WTC11 (cell line): ENCODE measurements at regions of chr1 and their contacts with region 1.

Region 1: GRCh38 chr1:233440951-233441401 is 113.5 kb downstream of the MAP3K21 start:
- DNase-seq: peak; percentile 34
- ATAC-seq: peak; percentile 94
- H3K4me3 Mint-ChIP-seq: no peak overlapping the region
- H3K27ac Mint-ChIP-seq: no peak overlapping the region
- H3K4me1 Mint-ChIP-seq: no peaks in the 10 kb centered on the region
- H3K27me3 Mint-ChIP-seq: no peaks in the 10 kb centered on the region; the same call in none of the 2 replicates
- CTCF ChIP-seq: peak; percentile 47

Region 2: DNA sequence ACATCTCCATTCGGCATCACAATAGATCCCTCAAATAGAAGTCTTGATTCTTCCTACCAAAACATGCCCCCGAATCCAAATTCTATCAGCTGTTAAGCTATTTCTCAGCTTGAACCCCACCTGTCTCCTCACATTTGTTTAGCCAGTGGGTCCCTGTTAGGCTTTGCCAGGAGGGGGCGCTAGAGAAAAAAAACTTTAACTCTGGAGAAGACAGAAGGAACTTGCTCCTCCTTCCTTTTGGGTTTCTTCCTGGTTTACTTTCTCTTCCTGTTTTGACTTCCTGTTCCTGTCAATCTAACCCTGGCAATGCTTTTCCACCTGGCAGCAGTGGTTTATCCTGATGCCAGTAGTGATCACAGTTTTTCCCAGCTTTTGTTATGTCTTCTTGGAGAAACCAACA is 77.4 kb after region 1 on chr1:
- CTCF ChIA-PET with region 1: interaction called, 19 read pairs
- POLR2A ChIA-PET with region 1: no interaction called
- DNase-seq: peak; percentile 71
- ATAC-seq: peak; percentile 81
- H3K4me3 Mint-ChIP-seq: no peak overlapping the region
- H3K27ac Mint-ChIP-seq: no peak overlapping the region
- H3K4me1 Mint-ChIP-seq: peaks cover 6% of the 10 kb centered on the region
- H3K27me3 Mint-ChIP-seq: no peaks in the 10 kb centered on the region
- CTCF ChIP-seq: peak; percentile 71

Region 3: GRCh38 chr1:233790662-233791375 is 349.8 kb after region 1 on chr1:
- CTCF ChIA-PET with region 1: interaction called, 22 read pairs
- POLR2A ChIA-PET with region 1: no interaction called
- DNase-seq: peak; percentile 16
- ATAC-seq: peak; percentile 95
- H3K4me3 Mint-ChIP-seq: no peak overlapping the region
- H3K27ac Mint-ChIP-seq: no peak overlapping the region
- H3K4me1 Mint-ChIP-seq: 0 out of 2 replicates have a peak, but pooled peaks cover 2% of the 10 kb centered on the region
- H3K27me3 Mint-ChIP-seq: no peaks in the 10 kb centered on the region
- CTCF ChIP-seq: peak; percentile 81

Region 4: GRCh38 chr1:233904633-233905415 is 463.8 kb after region 1 on chr1 and contains the start of gene SLC35F3:
- CTCF ChIA-PET with region 1: interaction called, 21 read pairs
- POLR2A ChIA-PET with region 1: no interaction called
- DNase-seq: peak; percentile 81
- ATAC-seq: peak; percentile 93
- H3K4me3 Mint-ChIP-seq: peak within 1 kb of the TSS; percentile 75
- H3K27ac Mint-ChIP-seq: no peak within 1 kb of the TSS
- H3K4me1 Mint-ChIP-seq: peaks cover 10% of the 10 kb centered on the region
- H3K27me3 Mint-ChIP-seq: peaks cover 79% of the 10 kb centered on the region
- CTCF ChIP-seq: peak; percentile 75; the same call in 1 of the 2 replicates
- total RNA-seq, gene SLC35F3: 0.85 to 1.2 TPM (median 0.94 TPM) in 3 replicates

Region 5: DNA sequence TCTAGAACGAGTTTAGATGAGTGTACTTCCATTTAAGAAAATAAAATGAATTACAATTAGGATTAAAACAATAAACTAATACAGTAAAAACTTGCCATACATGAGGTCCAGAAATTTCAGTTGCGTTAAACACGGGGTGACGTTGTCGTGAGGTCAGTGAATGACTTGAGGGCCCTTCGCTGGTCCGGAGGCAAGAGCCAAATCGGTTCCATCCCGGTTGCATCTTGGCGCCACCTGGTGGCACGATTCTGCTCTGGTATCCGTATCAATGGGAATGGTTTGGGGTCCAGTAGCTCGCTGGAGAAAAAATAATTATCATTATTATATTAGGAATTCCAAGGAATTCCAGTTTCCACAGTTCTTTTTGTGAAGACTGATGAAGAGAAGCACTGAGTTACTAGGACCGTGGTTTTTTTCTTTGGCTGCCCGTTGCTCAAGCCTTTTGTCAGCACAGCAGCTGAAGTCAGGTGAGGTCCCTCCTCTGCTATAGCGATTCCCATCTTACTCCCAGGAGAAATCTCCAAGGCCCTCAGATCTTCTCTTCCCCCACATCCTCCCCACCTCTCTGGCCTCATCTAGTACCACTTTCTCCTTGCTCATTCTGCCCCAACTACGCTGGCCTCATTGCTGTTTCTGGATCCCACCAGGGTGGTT is 624.9 kb after region 1 on chr1:
- CTCF ChIA-PET with region 1: interaction called, 12 read pairs
- POLR2A ChIA-PET with region 1: no interaction called
- DNase-seq: peak; percentile 90
- ATAC-seq: peak; percentile 91
- H3K4me3 Mint-ChIP-seq: no peak overlapping the region
- H3K27ac Mint-ChIP-seq: no peak overlapping the region
- H3K4me1 Mint-ChIP-seq: no peaks in the 10 kb centered on the region
- H3K27me3 Mint-ChIP-seq: no peaks in the 10 kb centered on the region; the same call in 1 of the 2 replicates
- CTCF ChIP-seq: peak; percentile 72

Region 6: DNA sequence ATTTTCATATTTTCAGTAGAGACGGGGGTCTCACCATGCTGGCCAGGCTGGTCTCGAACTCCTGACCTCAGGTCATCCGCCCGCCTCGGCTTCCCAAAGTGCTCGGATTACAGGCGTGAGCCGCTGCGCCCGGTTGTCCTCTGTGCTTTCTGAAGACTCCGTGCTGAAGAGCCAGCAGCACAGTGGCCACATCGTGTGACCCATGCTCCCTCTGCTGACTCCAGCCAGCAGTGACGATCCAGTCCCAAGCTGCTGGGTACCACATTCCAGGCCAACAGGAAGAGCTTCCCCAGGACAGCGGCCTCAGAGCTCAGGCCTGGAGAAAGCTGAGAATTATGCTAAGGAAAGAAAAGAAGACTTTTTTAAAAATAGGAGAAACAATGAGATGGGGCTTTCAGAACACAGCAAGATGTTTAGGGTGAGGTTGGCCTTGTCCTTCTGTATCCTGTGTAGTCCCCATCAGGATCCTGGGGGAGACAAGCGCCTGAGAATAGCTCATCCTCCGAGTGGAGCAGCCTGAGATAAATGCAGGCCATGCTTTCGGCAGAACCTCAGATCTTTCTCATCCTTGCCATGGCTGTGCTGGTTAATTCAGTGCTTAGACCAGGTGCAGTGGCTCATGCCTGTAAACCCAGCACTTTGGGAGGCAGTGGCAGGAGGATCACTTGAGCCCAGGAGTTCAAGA is 670.6 kb after region 1 on chr1:
- CTCF ChIA-PET with region 1: interaction called, 14 read pairs
- POLR2A ChIA-PET with region 1: no interaction called
- DNase-seq: peak; percentile 76
- ATAC-seq: peak; percentile 99
- H3K4me3 Mint-ChIP-seq: no peak overlapping the region
- H3K27ac Mint-ChIP-seq: peak overlapping the region; percentile 18; the same call in 1 of the 2 replicates
- H3K4me1 Mint-ChIP-seq: peaks cover 5% of the 10 kb centered on the region; the same call in 1 of the 2 replicates
- H3K27me3 Mint-ChIP-seq: peaks cover 5% of the 10 kb centered on the region
- CTCF ChIP-seq: no peak